AG04449 (cell line): ENCODE measurements at regions of chr13 and their contacts with region 1.

Region 1: GRCh38 chr13:39942552-39943273 is 287.3 kb downstream of the COG6 start:
- DNase-seq: no peak
- H3K4me3 ChIP-seq: no peak overlapping the region
- CTCF ChIP-seq: peak; percentile 97

Region 2: GRCh38 chr13:39641645-39642044 is 301.1 kb before region 1 on chr13:
- CTCF ChIA-PET with region 1: no interaction called
- POLR2A ChIA-PET with region 1: no interaction called
- DNase-seq: no peak
- H3K4me3 ChIP-seq: no peak overlapping the region
- CTCF ChIP-seq: no peak

Region 3: GRCh38 chr13:39684531-39685137 is 258.1 kb before region 1 on chr13:
- CTCF ChIA-PET with region 1: interaction called, 11 read pairs
- POLR2A ChIA-PET with region 1: no interaction called
- DNase-seq: peak; percentile 7
- H3K4me3 ChIP-seq: no peak overlapping the region
- CTCF ChIP-seq: peak; percentile 4

Region 4: DNA sequence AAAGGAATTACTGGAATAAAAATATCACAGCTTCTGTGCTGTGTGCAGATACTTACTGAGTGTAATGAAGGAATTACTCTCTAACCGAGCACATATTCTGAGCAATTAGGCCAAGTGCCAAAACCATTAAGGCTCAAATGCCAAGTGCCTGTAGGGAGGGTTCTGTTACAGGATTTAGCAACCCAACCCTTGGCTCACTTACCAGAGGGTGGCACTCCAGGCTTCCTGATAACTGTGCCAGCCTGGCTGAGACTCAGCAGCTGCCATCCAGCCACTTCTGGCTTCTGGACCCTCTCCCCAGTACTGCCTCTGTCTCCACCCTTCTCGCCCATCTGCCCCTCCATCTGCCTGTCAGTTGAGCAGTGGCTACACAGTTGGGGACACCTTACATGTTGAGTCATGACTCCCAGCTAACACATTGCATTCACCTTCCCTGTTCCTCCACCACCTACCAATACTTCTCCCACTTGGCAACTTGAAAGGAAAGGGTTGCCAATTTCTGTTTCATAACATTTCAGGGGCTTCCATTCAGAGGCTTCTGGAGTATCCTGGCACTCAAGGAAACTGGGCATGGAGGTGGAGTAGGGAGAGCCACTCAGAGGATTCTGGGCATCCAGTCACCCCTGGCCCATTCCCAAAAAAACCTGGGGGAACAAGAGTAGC is 176.8 kb before region 1 on chr13:
- CTCF ChIA-PET with region 1: interaction called, 10 read pairs
- POLR2A ChIA-PET with region 1: no interaction called
- DNase-seq: no peak
- H3K4me3 ChIP-seq: no peak overlapping the region
- CTCF ChIP-seq: peak; percentile 27

Region 5: DNA sequence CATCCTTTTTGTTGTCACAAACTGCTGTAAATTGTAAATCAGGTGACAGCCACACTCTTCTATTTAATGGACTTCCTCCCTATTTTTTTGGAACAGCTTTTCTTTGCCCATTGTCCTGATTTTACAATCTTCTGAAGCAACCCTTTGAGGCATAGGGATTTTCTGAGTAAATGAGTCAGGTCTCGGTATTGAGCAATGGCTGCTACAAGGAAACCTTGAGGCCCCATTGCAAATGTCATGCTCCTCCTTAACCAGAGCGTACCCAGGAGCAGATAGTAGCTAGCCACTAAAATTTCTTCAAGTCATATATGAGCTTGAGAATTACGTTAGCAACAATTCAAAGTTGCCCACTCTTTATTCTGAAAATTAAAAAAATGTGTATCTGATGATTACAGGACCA is 23.9 kb before region 1 on chr13:
- CTCF ChIA-PET with region 1: interaction called, 19 read pairs
- POLR2A ChIA-PET with region 1: no interaction called
- DNase-seq: no peak
- H3K4me3 ChIP-seq: no peak overlapping the region
- CTCF ChIP-seq: no peak

Region 6: DNA sequence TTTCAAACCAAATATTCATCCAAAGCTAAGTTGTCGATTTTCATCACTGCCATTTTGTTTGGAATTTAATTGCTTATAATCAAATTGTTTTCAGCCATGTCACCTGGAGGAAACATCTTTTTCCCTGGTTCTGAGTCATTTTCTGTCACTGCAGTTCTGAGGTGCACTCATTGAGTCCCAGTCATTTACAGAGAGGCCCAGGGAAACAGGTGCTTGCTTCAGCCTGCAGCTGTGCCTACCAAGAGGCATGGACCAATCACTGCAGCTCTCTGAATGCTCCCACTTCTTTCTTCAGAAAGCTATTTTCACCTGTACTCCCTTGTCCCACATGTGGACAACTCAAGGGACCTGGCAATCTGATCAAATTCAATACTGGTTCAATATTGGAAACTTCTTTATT is 20.9 kb after region 1 on chr13:
- CTCF ChIA-PET with region 1: interaction called, 12 read pairs
- POLR2A ChIA-PET with region 1: no interaction called
- DNase-seq: no peak
- H3K4me3 ChIP-seq: no peak overlapping the region
- CTCF ChIP-seq: no peak

Region 7: GRCh38 chr13:40682449-40683240 is 739.9 kb after region 1 on chr13:
- CTCF ChIA-PET with region 1: interaction called, 32 read pairs
- POLR2A ChIA-PET with region 1: no interaction called
- DNase-seq: no peak
- H3K4me3 ChIP-seq: no peak overlapping the region
- CTCF ChIP-seq: peak; percentile 1